Left cardiac atrium (tissue), 4 donors: ENCODE measurements at regions of chr9 and their contacts with region 1.

Region 1: DNA sequence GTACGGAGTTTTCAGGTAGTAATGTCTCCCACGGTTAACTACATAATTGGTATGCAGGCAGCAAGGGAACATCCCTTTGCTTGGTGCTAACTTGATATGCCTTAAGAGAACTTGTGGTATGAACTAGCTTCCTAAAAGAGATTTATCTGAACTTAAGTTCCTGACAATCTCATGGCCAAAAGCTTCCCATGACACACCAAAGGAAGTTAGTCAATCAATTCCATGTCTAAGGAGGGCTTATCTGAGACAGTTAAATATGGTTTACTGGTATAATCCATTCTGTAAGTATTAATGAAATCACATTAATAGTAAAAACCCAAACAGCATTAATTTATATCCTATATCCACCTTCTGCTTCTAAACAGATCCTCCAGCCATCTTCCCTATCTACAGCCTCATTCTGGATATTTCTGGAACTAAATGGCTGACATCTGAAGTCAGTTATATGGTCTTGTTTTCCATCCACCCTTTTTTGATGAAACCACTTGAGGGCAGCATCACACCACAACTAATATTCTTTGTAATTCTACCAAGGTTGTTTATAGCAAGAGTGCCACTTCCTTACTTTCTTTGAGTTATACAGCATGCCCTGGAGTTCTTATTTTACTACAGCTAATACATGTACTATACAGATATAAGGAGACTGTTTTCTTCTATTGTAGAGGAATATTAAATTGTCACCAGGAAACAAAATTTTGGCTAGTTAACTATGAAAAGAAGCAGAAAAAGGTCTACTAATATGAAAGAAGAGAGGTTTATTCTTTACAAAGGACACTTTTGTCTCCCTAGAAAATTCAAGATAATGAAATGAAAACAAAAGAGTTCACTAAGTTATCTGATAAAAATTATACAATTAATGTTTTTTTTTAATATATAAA is 34.7 kb downstream of the SHOC1 start:
- DNase-seq: no peak
- ATAC-seq: peak; percentile 84

Region 2: GRCh38 chr9:111798786-111799185 is 38.8 kb after region 1 on chr9:
- intact Hi-C with region 1: no loop called
- DNase-seq: no peak
- ATAC-seq: no peak

Region 3: DNA sequence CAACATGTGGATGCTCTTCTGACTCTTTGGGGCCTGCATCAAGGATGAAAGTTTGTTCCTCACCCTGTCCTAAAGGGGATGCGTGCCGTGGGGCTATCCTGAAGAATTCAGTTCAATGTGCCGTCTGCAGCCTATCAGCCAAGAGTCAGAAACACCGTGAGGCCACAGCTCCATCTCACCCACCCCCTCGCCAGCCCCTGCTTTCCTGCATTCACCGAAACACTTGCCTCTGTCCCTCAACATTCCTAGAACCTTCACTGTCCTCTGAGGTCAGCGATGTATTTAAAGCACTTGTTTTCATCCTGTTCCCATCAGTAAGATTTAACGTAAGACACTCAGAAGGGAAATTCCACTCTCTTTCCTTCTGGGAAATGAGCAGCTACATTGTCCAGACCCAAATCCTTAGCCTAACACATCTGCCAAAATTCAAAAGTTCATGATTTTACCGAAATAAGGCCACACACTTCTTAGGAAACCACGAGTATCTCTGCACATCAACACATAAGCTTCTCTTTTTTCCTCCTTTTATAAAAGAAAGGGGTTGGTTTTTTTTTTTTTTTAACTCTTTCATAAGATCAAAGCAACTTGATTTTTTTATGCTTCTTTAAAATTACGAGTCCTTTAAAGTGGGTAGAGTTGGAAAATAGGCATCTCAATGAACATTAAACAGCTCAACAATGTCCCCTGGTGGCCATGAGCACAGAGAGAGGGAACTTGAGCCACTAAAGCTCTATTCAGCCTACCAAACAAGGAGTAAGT is 314.4 kb after region 1 on chr9:
- intact Hi-C with region 1: loop called (anchors 1 to 5 kb)
- DNase-seq: peak; percentile 64
- ATAC-seq: peak; percentile 85 to 87